ENCODE measurements at regions of chr16 and their contacts with region 1.

Region 1: DNA sequence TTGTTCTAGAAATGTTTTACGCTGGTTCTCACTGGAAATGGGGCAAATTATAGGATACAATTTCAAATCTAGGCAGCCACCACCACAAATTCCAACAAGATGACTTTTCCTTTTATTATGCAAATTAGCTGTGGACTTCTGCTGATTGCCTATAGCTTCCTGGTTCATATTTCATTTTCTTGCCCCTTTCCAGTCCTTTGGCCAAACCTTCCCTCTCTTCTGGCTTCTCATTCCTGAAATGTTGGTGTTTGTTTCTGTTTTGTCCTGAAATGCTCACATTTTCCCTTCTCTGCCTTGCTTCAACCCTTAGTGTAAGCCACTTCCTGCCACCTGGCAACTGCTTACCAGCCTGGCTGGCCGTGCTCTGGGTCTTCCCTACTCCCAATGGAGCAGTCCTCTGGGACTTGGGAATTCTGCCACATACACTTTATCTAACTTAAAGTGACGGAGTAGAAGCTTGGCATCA is 14.0 kb downstream of the PRSS54 start:
- DNase-seq: no peak
- ATAC-seq: peak in 1 of 8 donors; percentile 29
- H3K4me3 ChIP-seq: no peak overlapping the region
- H3K27ac ChIP-seq: no peak overlapping the region
- H3K4me1 ChIP-seq: no peaks in the 10 kb centered on the region
- H3K27me3 ChIP-seq: no peaks in the 10 kb centered on the region
- CTCF ChIP-seq: no peak

Region 2: GRCh38 chr16:59632276-59632855 is 1351.5 kb after region 1 on chr16:
- intact Hi-C with region 1: loop called in 1 of 10 experiments (anchors 10 kb)
- DNase-seq: no peak
- ATAC-seq: no peak
- H3K4me3 ChIP-seq: no peak overlapping the region
- H3K27ac ChIP-seq: no peak overlapping the region
- H3K4me1 ChIP-seq: no peaks in the 10 kb centered on the region
- H3K27me3 ChIP-seq: no peaks in the 10 kb centered on the region
- CTCF ChIP-seq: no peak

Measured in heart right ventricle (tissue), 16 donors.